Activated naive CD4-positive, alpha-beta T cell treated with anti-CD3 and anti-CD28 coated beads for 36 hours (primary cell): ENCODE measurements at regions of chr2 and their contacts with region 1.

Region 1: GRCh38 chr2:38947240-38948239 is 57.9 kb downstream of the ARHGEF33 start:
- DNase-seq: peak; percentile 85
- H3K4me3 Mint-ChIP-seq: no peak overlapping the region
- H3K27ac Mint-ChIP-seq: no peak overlapping the region
- H3K4me1 Mint-ChIP-seq: no peaks in the 10 kb centered on the region
- H3K27me3 Mint-ChIP-seq: no peaks in the 10 kb centered on the region

Region 2: DNA sequence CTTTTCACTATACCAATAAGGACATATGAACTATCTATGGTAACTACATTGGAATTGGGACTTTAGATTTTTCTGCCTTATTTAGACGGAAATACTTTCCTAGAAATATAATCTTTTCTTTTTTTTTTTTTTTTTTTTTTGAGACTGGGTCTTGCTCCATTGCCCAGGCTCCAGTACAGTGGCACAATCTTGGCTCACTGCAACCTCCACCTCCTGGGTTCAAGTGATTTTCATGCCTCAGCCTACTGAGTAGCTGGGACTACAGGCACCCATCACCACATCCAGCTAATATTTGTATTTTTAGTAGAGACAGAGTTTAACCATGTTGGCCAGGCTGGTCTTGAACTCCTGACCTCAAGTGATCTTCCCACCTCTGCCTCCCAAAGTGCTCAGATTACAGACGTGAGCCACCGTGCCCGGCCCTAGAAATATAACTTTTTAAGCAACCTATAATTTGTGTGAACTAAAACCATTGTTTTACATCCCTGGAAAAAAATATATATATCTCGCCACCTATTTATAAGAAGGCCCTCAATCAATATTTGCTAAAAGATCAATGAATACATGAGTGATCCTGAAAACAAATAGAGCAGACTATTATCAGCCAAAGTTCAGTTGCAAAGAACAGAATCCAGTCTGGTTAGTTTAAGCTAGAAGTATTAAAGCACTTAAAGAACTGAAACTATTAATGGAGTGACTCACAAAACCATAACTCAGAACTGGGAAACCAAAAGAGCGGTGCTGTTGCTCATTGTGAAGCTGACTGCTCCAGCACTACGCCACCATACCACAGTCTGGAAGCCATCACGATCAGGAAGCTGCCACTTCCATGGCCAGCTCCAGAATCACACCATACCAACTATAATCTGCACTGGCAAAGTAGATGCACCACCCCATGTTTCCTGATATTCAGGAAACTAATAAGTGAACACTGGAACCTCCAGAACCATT is 336.4 kb before region 1 on chr2:
- CTCF ChIA-PET with region 1: no interaction called
- intact Hi-C with region 1: no loop called
- DNase-seq: peak; percentile 40
- H3K4me3 Mint-ChIP-seq: no peak overlapping the region
- H3K27ac Mint-ChIP-seq: no peak overlapping the region
- H3K4me1 Mint-ChIP-seq: peaks cover 68% of the 10 kb centered on the region
- H3K27me3 Mint-ChIP-seq: no peaks in the 10 kb centered on the region

Region 3: GRCh38 chr2:38930600-38930999 is 16.9 kb before region 1 on chr2:
- CTCF ChIA-PET with region 1: interaction called, 16 read pairs
- intact Hi-C with region 1: no loop called
- DNase-seq: no peak
- H3K4me3 Mint-ChIP-seq: no peak overlapping the region
- H3K27ac Mint-ChIP-seq: no peak overlapping the region
- H3K4me1 Mint-ChIP-seq: peaks cover 1% of the 10 kb centered on the region
- H3K27me3 Mint-ChIP-seq: no peaks in the 10 kb centered on the region

Region 4: GRCh38 chr2:38935568-38936172 is 11.9 kb before region 1 on chr2:
- CTCF ChIA-PET with region 1: interaction called, 16 read pairs
- intact Hi-C with region 1: no loop called
- DNase-seq: no peak
- H3K4me3 Mint-ChIP-seq: no peak overlapping the region
- H3K27ac Mint-ChIP-seq: no peak overlapping the region
- H3K4me1 Mint-ChIP-seq: peaks cover 4% of the 10 kb centered on the region
- H3K27me3 Mint-ChIP-seq: no peaks in the 10 kb centered on the region

Region 5: GRCh38 chr2:38959938-38960608 is 12.5 kb after region 1 on chr2:
- CTCF ChIA-PET with region 1: interaction called, 11 read pairs
- intact Hi-C with region 1: no loop called
- DNase-seq: peak; percentile 74
- H3K4me3 Mint-ChIP-seq: peak overlapping the region; percentile 52
- H3K27ac Mint-ChIP-seq: no peak overlapping the region
- H3K4me1 Mint-ChIP-seq: no peaks in the 10 kb centered on the region
- H3K27me3 Mint-ChIP-seq: peaks cover 12% of the 10 kb centered on the region

Region 6: GRCh38 chr2:39059366-39059952 is 111.9 kb after region 1 on chr2:
- CTCF ChIA-PET with region 1: interaction called, 18 read pairs
- intact Hi-C with region 1: loop called (anchors 2 kb)
- DNase-seq: no peak
- H3K4me3 Mint-ChIP-seq: no peak overlapping the region
- H3K27ac Mint-ChIP-seq: no peak overlapping the region
- H3K4me1 Mint-ChIP-seq: peaks cover 2% of the 10 kb centered on the region
- H3K27me3 Mint-ChIP-seq: no peaks in the 10 kb centered on the region

Region 7: DNA sequence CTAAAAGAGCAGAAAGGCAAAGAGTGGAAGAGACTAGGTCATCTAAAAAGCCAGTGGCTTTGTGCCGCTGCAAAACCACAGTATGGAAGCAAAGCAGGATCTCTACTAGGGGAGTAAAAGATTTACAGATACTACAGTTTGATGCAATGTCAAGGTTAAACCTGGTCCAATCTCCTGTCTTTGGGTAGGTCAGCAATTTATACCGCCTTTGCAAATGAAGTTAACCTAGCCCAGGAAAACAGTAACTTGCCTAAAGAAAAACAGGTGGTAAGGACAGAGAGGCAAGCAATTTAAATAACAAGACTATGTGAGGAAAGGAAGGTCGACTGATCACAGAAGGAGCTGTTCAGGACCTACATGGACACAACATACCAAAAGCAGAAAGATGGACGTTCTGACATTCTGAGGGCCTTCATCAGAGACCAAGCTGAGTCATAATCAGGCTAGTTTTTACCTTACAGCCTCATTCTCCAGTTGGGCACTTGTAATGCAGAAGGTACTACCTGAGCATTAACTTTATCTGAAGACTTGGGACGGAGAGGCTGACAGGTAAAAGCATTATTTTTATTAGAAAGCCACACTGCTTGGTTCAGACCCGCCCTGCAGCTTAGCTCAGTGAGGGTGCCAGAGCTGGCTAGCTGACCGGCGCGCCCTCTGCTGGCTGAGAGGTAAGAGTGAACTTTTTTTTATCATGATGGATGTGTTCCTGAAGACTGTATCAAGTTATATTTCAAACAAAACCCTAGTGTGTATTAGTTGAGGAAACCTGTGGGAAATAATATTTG is 280.3 kb after region 1 on chr2:
- CTCF ChIA-PET with region 1: interaction called, 86 read pairs
- intact Hi-C with region 1: loop called (anchors 1 kb)
- DNase-seq: peak; percentile 89
- H3K4me3 Mint-ChIP-seq: peak overlapping the region; percentile 66
- H3K27ac Mint-ChIP-seq: no peak overlapping the region
- H3K4me1 Mint-ChIP-seq: peaks cover 15% of the 10 kb centered on the region
- H3K27me3 Mint-ChIP-seq: no peaks in the 10 kb centered on the region

Region 8: GRCh38 chr2:39234754-39235153 is 287.2 kb after region 1 on chr2:
- CTCF ChIA-PET with region 1: interaction called, 86 read pairs
- intact Hi-C with region 1: loop called (anchors 1 kb)
- DNase-seq: no peak
- H3K4me3 Mint-ChIP-seq: no peak overlapping the region
- H3K27ac Mint-ChIP-seq: no peak overlapping the region
- H3K4me1 Mint-ChIP-seq: peaks cover under 1% of the 10 kb centered on the region
- H3K27me3 Mint-ChIP-seq: no peaks in the 10 kb centered on the region